ENCODE measurements at regions of chr9 and their contacts with region 1.

Region 1: GRCh38 chr9:99819856-99820684 is 1.6 kb upstream of the NR4A3 start:
- DNase-seq: peak; percentile 96 to 98 (median 98)
- H3K4me3 ChIP-seq: peak overlapping the region; percentile 64 to 93 (median 66)
- H3K4me3 Mint-ChIP-seq: peak overlapping the region; percentile 100
- H3K27ac ChIP-seq: peak overlapping the region; percentile 81 to 94
- H3K27ac Mint-ChIP-seq: peak overlapping the region; percentile 97 to 100 (median 99)
- H3K4me1 ChIP-seq: peaks cover 53 to 56% of the 10 kb centered on the region in 2 donors
- H3K4me1 Mint-ChIP-seq: peaks cover 47% of the 10 kb centered on the region
- H3K27me3 ChIP-seq: peaks cover 22 to 31% of the 10 kb centered on the region in 2 donors
- H3K27me3 Mint-ChIP-seq: peaks cover 31 to 40% (median 36%) of the 10 kb centered on the region in 3 donors
- CTCF ChIP-seq: no peak

Region 2: GRCh38 chr9:99118782-99119466 is 701.1 kb before region 1 on chr9:
- intact Hi-C with region 1: loop called in 1 of 2 experiments (anchors 5 kb)
- DNase-seq: peak; percentile 52 to 67 (median 60)
- H3K4me3 ChIP-seq: peak overlapping the region; percentile 24 to 70 (median 26)
- H3K4me3 Mint-ChIP-seq: peak overlapping the region; percentile 70 to 87
- H3K27ac ChIP-seq: peak overlapping the region; percentile 6 to 82
- H3K27ac Mint-ChIP-seq: peak overlapping the region; percentile 82 to 94 (median 91)
- H3K4me1 ChIP-seq: peaks cover 35 to 41% of the 10 kb centered on the region in 2 donors
- H3K4me1 Mint-ChIP-seq: peaks cover 55% of the 10 kb centered on the region
- H3K27me3 ChIP-seq: no peaks in the 10 kb centered on the region
- H3K27me3 Mint-ChIP-seq: no peaks in the 10 kb centered on the region
- CTCF ChIP-seq: no peak

Region 3: GRCh38 chr9:99595796-99596195 is 224.3 kb before region 1 on chr9:
- intact Hi-C with region 1: loop called in 1 of 2 experiments (anchors 5 kb)
- DNase-seq: peak; percentile 90 to 96 (median 92)
- H3K4me3 ChIP-seq: no peak overlapping the region
- H3K4me3 Mint-ChIP-seq: peak overlapping the region in 1 of 2 donors; percentile 33
- H3K27ac ChIP-seq: peak overlapping the region in 1 of 2 donors; percentile 80
- H3K27ac Mint-ChIP-seq: peak overlapping the region; percentile 87 to 97 (median 92)
- H3K4me1 ChIP-seq: peaks cover 36 to 42% of the 10 kb centered on the region in 2 donors
- H3K4me1 Mint-ChIP-seq: peaks cover 41% of the 10 kb centered on the region
- H3K27me3 ChIP-seq: no peaks in the 10 kb centered on the region
- H3K27me3 Mint-ChIP-seq: peaks cover 0 to 5% (median 2%) of the 10 kb centered on the region in 3 donors
- CTCF ChIP-seq: no peak

Region 4: GRCh38 chr9:99906403-99907207 is 86.5 kb after region 1 on chr9 and contains the start of gene STX17:
- intact Hi-C with region 1: loop called (anchors 5 to 10 kb)
- DNase-seq: peak; percentile 51 to 62 (median 60)
- H3K4me3 ChIP-seq: peak within 1 kb of the TSS; percentile 82 to 85 (median 83)
- H3K4me3 Mint-ChIP-seq: peak within 1 kb of the TSS; percentile 98 to 99
- H3K27ac ChIP-seq: peak within 1 kb of the TSS; percentile 72 to 95
- H3K27ac Mint-ChIP-seq: peak within 1 kb of the TSS; percentile 87 to 96 (median 93)
- H3K4me1 ChIP-seq: peaks cover 8 to 17% of the 10 kb centered on the region in 2 donors
- H3K4me1 Mint-ChIP-seq: peaks cover 21% of the 10 kb centered on the region
- H3K27me3 ChIP-seq: no peaks in the 10 kb centered on the region
- H3K27me3 Mint-ChIP-seq: peaks cover 1 to 7% (median 5%) of the 10 kb centered on the region in 3 donors
- CTCF ChIP-seq: no peak
- polyA plus RNA-seq, gene STX17: 10.3 to 16.8 (median 10.6) TPM

Region 5: DNA sequence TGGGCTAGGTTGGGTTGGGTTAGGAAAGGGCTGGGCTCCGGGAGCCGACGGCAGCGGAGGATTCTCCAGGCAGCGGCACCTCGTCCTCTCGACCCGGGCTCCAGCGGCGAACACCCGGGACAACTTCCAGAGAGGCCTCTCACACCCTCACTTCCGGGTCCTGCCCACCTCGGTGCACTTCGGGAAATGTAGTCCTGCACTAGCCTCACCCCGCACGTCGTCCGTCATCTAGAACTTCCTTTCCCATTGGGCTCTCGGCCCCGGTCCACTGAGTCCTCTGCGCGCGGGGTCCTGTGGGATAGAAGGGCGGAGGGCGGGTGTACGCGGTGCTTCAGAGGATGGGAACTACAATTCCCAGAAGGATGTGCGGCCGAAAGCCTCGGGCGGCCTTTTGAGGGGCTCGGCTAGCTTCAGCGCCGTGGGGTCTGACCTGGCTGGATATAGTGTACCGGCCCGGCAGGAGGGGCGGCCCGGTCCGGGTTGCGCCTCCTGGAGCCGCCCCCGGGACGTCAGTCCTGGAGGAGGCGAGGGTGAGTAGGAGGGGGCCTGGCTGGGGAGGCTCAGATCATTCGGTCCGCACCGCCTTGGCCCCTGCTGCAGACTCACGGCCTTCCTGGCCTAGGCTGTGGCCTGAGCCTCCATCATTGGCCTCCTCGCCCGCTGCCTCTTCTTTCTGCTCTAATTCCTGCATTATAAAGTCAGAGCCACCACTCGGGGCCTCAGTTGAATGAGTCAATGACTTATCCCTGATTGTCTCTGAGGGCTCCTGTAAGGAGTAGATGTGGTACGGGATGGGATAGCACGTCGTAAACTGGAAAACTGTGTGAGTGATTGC is 279.0 kb after region 1 on chr9 and contains the starts of genes ERP44 and INVS:
- intact Hi-C with region 1: loop called in 1 of 2 experiments (anchors 10 kb)
- DNase-seq: peak; percentile 98 to 99 (median 98)
- H3K4me3 ChIP-seq: peak within 1 kb of the TSS; percentile 83 to 97 (median 96)
- H3K4me3 Mint-ChIP-seq: peak within 1 kb of the TSS; percentile 100
- H3K27ac ChIP-seq: peak within 1 kb of the TSS; percentile 99 to 100
- H3K27ac Mint-ChIP-seq: peak within 1 kb of the TSS; percentile 100
- H3K4me1 ChIP-seq: peaks cover 16 to 24% of the 10 kb centered on the region in 2 donors
- H3K4me1 Mint-ChIP-seq: peaks cover 30% of the 10 kb centered on the region
- H3K27me3 ChIP-seq: no peaks in the 10 kb centered on the region
- H3K27me3 Mint-ChIP-seq: peaks cover 0 to 2% (median 0%) of the 10 kb centered on the region in 3 donors
- CTCF ChIP-seq: no peak
- polyA plus RNA-seq, gene ERP44: 18.4 to 74.0 (median 66.3) TPM
- polyA plus RNA-seq, gene INVS: 2.9 to 6.7 (median 4.2) TPM

Measured in CD14-positive monocyte (primary cell).